ENCODE measurements at regions of chr6 and their contacts with region 1.

Region 1: GRCh38 chr6:158548418-158549161 is 11.3 kb upstream of the TMEM181 start:
- DNase-seq: no peak
- ATAC-seq: no peak
- H3K4me3 ChIP-seq: no peak overlapping the region
- H3K27ac ChIP-seq: no peak overlapping the region
- H3K4me1 ChIP-seq: peaks cover 3% of the 10 kb centered on the region; the same call in 1 of the 2 replicates
- H3K27me3 ChIP-seq: no peaks in the 10 kb centered on the region
- CTCF ChIP-seq: no peak

Region 2: DNA sequence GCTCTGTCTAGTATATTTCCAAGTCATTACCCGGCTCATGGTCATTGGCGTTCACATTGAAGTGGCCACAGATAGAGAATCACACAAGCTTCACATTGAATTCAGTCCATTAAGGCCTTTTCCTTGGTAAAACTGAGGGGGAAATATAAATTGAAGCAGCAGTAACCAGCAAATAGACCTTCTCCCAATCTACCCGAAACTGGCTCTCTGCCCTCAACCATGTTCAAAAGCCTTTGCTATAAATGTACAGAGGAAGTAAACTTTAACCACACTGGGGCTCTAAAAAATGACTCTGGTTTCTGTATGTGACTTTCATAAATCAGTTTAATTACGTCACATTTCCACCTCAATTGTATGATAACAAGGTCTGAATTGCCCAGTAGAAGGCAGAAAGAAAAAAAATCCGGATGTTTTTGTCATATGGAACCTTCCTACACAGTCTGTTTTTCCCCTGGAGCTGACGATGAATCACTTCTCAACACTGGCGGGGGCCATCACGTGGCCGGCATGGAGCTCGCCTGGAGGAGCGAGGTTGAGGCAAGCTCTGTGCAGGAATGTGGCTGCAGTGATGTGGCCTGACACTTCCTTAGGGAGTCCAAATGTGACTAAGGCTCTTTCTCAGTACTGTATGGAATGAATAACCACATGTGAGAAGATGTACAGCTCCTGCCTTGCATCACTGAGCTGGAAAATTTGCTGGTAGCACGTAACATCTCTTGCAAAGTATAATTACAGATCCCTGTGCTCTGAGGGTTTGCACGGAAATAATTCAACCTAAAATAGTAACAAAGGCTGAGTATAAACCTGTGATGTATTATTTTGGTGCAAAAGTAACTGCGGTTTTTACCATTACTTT is 784.2 kb before region 1 on chr6:
- CTCF ChIA-PET with region 1: no interaction called
- POLR2A ChIA-PET with region 1: interaction called, 10 read pairs
- in situ Hi-C with region 1: no loop called
- intact Hi-C with region 1: no loop called
- DNase-seq: peak; percentile 98
- ATAC-seq: peak; percentile 87
- H3K4me3 ChIP-seq: peak overlapping the region in 1 of 2 experiments; percentile 31; a peak in 2 of 4 replicates
- H3K27ac ChIP-seq: peak overlapping the region; percentile 94
- H3K4me1 ChIP-seq: peaks cover 57% of the 10 kb centered on the region
- H3K27me3 ChIP-seq: no peaks in the 10 kb centered on the region
- CTCF ChIP-seq: no peak

Region 3: GRCh38 chr6:158311193-158311592 is 237.4 kb before region 1 on chr6:
- CTCF ChIA-PET with region 1: no interaction called
- POLR2A ChIA-PET with region 1: no interaction called
- in situ Hi-C with region 1: no loop called
- intact Hi-C with region 1: no loop called
- DNase-seq: no peak
- ATAC-seq: no peak
- H3K4me3 ChIP-seq: no peak overlapping the region
- H3K27ac ChIP-seq: no peak overlapping the region
- H3K4me1 ChIP-seq: no peaks in the 10 kb centered on the region
- H3K27me3 ChIP-seq: no peaks in the 10 kb centered on the region
- CTCF ChIP-seq: no peak

Region 4: DNA sequence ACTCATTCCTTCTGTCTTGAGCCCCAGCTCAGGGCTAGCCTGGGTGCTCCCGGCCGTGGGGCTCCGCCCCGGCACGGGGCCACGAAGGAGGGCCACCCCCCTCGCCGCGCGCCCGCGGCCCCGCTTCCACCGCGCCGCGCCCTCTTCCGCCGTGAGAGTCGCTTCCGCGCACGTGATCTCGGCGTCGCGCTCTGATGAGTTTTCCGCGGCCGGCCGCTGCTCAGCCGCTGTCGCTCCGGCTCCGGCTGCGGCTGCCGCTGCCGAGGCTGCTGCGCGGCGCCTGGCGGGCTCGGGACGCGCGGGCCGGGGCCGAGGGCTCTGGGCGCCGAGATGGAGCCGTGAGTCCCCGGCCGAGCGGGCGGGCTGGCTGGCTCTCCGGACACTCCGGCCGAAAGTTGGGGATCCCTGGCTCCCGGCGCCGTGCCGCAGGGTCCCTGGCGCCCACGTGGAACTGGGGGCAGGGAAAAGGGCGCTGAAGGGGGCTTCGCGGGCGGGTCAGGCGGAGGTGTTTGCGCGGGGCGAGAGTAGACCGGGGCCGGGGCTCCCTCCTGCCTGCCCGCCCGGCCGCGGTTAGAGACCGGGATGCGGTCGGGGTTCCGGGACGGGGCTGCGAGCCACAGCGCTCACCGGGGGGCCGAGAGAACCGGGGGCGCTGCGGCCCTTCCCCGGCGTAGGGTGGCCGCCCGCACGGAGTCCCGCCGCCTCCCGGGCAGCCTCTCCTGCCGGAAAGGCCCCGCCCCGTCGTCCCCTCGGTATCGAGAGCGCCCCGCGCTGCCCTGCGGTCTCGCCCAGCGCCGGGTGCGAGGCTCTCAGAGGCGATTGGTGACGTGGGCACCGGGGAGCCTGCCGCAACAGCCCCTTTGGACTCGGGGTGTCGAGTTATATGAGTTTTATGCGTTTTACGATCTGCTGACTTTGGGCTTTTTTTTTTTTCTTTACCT is 11.6 kb after region 1 on chr6 and contains the start of gene TMEM181:
- CTCF ChIA-PET with region 1: interaction called, 20 read pairs
- POLR2A ChIA-PET with region 1: interaction called, 22 read pairs
- in situ Hi-C with region 1: no loop called
- intact Hi-C with region 1: no loop called
- DNase-seq: peak; percentile 25
- ATAC-seq: peak; percentile 91
- H3K4me3 ChIP-seq: peak within 1 kb of the TSS; percentile 72 to 86
- H3K27ac ChIP-seq: peak within 1 kb of the TSS; percentile 94
- H3K4me1 ChIP-seq: peaks cover 23% of the 10 kb centered on the region
- H3K27me3 ChIP-seq: no peaks in the 10 kb centered on the region
- CTCF ChIP-seq: no peak
- total RNA-seq, gene TMEM181: 38.0 TPM